ENCODE measurements at regions of chr18 and their contacts with region 1.

Region 1: DNA sequence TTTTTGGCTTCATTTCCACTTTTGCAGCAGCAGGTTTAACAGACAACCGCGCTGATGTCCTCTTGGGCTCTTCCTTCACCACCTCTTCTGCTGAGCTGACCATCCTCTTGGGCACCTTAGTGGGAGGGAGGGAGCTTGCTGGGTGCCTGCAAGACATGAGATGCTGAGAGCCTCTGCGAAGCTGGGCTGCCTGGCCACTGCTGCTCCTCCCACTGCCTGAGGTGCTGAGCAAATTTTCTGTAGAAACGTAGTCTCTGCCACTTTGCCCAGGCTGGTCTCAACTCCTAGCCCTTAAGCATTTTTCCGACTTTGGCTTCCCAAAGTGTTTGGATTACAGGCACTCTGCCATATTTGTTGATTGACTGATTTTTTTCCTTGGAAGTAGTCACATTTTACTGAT is 422.2 kb upstream of the MC4R start:
- DNase-seq: no peak
- ATAC-seq: no peak
- H3K4me3 Mint-ChIP-seq: no peak overlapping the region
- H3K27ac Mint-ChIP-seq: no peak overlapping the region
- H3K4me1 Mint-ChIP-seq: no peaks in the 10 kb centered on the region
- H3K27me3 Mint-ChIP-seq: no peaks in the 10 kb centered on the region

Region 2: DNA sequence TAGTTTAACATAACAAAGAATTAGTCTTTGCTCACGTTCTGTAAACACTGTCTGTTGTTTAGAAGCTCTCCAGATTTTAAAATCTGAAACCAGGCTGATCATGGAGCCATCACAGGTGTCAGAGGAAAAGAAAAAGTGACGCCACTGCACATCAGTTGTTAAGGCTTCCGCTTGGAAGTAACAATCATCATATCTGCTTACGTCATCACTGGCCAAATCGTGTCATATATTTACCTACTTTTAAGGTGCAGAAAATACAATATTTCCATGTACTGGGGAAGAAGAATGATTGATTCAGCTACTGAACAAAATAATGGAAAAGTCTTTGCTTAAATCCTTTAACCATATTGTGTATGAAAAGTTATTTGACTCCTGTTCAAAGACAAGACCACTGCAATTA is 39.7 kb before region 1 on chr18:
- CTCF ChIA-PET with region 1: no interaction called
- POLR2A ChIA-PET with region 1: no interaction called
- intact Hi-C with region 1: no loop called
- DNase-seq: no peak
- ATAC-seq: no peak
- H3K4me3 Mint-ChIP-seq: no peak overlapping the region
- H3K27ac Mint-ChIP-seq: no peak overlapping the region
- H3K4me1 Mint-ChIP-seq: no peaks in the 10 kb centered on the region
- H3K27me3 Mint-ChIP-seq: no peaks in the 10 kb centered on the region

Region 3: DNA sequence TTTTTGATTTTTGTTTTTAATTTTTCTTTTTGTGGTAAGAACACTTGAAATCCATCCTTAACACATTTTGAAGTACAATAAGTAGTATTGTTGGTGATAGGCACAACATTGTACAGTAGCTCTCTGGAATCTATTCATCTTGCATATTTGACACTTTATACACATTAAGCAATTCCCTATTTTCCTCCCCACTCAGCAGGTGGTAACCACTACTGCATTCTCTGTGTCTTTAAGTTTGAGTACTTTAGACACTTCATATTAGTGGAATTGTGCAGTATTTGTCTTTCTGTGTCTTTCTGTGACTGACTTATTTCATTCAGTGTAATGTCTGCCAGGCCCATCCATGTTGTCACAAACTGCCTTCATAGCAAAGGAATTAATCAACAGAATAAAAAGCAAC is 66.8 kb after region 1 on chr18:
- CTCF ChIA-PET with region 1: no interaction called
- POLR2A ChIA-PET with region 1: no interaction called
- intact Hi-C with region 1: loop called in 1 of 2 experiments (anchors 10 kb)
- DNase-seq: no peak
- ATAC-seq: no peak
- H3K4me3 Mint-ChIP-seq: no peak overlapping the region
- H3K27ac Mint-ChIP-seq: no peak overlapping the region
- H3K4me1 Mint-ChIP-seq: no peaks in the 10 kb centered on the region
- H3K27me3 Mint-ChIP-seq: no peaks in the 10 kb centered on the region

Region 4: GRCh38 chr18:61025596-61025995 is 230.8 kb after region 1 on chr18:
- CTCF ChIA-PET with region 1: no interaction called
- POLR2A ChIA-PET with region 1: no interaction called
- intact Hi-C with region 1: no loop called
- DNase-seq: no peak
- ATAC-seq: no peak
- H3K4me3 Mint-ChIP-seq: no peak overlapping the region
- H3K27ac Mint-ChIP-seq: no peak overlapping the region
- H3K4me1 Mint-ChIP-seq: no peaks in the 10 kb centered on the region
- H3K27me3 Mint-ChIP-seq: no peaks in the 10 kb centered on the region

Measured in activated CD4-positive, alpha-beta T cell treated with anti-CD3 and anti-CD28 coated beads for 36 hours (primary cell).